HepG2 (cell line): ENCODE measurements at regions of chr14 and their contacts with region 1.

Region 1: DNA sequence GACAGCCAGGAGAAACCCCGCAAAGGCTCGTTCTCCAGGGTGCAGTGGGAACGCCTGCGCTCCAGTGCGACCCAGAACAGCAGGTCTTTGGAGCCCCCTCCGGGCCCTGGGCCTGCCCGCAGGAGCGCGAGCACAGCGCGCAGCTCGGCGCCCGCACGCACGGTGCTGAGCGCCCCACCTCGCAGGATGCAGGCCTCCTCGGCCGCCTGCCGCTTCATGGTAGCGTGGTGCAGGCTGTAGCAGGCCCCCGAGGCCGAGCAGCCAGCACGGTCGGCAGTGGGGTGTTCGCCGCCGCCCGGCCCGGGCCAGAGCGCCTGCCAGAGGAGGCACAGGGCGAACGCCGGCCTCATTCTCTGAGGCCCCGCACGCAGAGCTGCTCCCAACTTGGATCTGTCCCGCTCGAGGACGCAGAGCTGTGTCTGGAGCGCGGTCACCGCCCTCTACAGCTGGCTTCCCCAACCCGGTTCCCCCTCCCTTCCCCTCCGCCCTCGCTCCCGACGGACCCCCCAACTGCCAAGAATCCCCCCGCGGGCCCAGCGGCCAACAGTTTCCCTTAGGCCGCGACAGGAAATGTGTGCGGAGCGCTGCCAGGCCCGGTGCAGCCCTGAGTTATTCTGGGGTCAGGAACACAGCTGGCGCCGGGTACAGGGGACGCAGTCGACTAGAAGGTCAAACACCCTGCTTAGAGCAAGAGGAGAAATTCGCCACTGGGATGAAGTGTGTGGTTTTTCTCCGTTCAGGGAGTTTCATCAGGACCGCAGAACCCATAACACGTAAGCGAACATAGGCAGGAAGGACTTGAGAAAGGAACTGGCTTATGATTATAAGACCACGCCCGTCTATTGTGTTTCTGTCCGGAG is at the start of gene CLEC14A:
- DNase-seq: no peak
- ATAC-seq: peak; percentile 52
- H3K4me3 ChIP-seq: no peak within 1 kb of the TSS
- H3K27ac ChIP-seq: no peak within 1 kb of the TSS
- H3K4me1 ChIP-seq: no peaks in the 10 kb centered on the region
- H3K27me3 ChIP-seq: no peaks in the 10 kb centered on the region
- CTCF ChIP-seq: no peak
- EP300 ChIP-seq: no peak
- POLR2A ChIP-seq: no peak
- RAD21 ChIP-seq: no peak
- total RNA-seq, gene CLEC14A: not detected in 2 replicates

Region 2: DNA sequence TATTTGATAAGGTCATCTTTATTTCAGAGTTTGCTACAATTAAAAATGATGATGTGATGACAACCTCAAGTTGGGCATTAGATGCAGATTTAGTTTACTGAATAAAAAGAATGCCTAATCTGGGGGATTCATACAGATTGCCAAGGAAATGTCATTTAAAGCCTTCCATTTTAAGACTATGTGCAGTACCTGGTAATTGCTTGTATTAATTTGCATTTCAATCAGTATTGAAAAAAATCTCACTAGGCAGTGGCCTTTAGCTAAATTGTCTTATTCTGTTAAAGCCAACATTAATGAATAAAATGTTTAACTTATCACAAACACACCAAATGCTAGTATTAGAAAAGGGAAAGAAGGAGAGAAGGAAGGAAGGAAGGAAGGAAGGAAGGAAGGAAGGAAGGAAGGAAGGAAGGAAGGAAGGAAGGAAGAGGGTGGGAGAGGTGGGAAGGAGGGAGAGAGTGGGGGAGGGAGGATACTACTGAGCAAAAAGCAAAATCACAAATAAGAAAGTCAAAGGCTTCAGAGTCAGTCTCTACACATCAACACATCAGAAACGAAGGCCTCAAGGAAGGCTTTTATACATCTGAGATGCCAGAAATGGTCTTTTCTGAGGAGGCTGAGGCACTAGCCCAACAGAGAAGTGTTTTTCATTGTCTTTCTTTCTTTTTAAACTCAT is 271.1 kb after region 1 on chr14:
- CTCF ChIA-PET with region 1: no interaction called
- POLR2A ChIA-PET with region 1: no interaction called
- in situ Hi-C with region 1: no loop called
- intact Hi-C with region 1: loop called (anchors 1 kb)
- DNase-seq: no peak
- ATAC-seq: no peak
- H3K4me3 ChIP-seq: no peak overlapping the region
- H3K27ac ChIP-seq: no peak overlapping the region
- H3K4me1 ChIP-seq: no peaks in the 10 kb centered on the region
- H3K27me3 ChIP-seq: no peaks in the 10 kb centered on the region
- CTCF ChIP-seq: no peak
- EP300 ChIP-seq: no peak
- POLR2A ChIP-seq: no peak
- RAD21 ChIP-seq: no peak